ENCODE measurements at regions of chr16 and their contacts with region 1.

Region 1: DNA sequence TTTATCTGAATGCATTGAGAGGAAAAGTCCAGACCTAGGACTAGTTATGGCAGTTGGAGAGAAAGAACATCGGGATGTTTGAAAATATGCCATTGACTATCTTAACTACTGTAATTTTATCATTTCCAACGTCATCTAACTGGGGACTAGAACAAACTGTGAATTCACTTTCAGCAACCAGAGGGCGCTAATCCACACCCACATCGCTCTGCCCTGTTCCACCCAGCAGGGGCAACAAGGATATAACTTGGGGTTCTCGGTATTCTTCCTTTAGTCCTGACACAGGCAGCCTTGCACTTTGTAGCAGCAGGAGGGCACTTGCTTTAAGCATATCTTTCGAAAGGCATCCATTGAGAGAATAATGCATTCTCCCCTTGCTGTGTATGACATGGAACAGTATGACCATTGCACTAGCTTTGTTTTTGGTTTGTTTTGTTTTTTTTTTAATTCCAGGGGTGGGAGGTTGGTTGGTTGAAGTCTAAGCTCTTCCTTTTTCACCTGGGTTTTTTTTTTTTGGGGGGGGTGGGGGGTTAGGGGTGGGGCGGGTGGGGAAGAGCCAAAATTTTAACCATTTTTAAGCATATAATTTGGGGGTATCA is 31.5 kb downstream of the SIAH1 start:
- DNase-seq: peak; percentile 51 to 63
- H3K4me3 ChIP-seq: no peak overlapping the region
- H3K27ac ChIP-seq: no peak overlapping the region
- H3K4me1 ChIP-seq: peaks cover 0 to 2% (median 0%) of the 10 kb centered on the region in 4 experiments; a peak in 1 of 7 replicates
- H3K27me3 ChIP-seq: no peaks in the 10 kb centered on the region
- CTCF ChIP-seq: peak; percentile 79 to 99 (median 96)
- EP300 ChIP-seq: no peak
- POLR2A ChIP-seq: peak in 1 of 2 experiments; percentile 22; a peak in 1 of 3 replicates
- RAD21 ChIP-seq: peak; percentile 78 to 84

Region 2: DNA sequence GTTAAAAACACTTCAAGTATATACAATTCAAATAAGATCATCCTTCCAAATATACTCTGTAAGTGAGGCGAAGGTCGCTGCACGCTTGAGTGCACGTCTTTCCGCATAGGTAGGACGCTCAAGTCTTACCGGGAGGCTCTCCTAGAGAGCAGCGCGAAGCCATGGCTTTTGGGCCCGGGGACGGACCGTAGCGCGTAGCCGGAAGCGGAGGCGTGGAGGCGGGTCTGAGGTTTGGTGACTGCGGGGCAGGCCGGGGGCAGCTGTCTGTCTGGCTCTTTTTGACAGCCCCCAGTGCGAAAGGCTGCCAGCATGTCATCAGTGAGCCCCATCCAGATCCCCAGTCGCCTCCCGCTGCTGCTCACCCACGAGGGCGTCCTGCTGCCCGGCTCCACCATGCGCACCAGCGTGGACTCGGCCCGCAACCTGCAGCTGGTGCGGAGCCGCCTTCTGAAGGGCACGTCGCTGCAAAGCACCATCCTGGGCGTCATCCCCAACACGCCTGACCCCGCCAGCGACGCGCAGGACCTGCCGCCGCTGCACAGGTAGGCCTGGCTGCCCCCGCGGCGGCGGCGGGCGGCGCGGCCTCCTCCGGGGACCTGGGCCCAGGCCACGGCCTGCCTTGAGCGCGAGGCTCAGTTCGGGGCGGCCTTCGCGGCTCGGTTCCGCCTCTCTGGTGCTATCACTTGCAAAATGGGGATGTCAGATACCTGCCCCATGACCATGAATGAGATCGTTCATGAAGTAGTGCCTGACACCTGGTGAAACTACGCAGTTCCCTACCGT is 109.4 kb before region 1 on chr16 and contains the start of gene LONP2:
- CTCF ChIA-PET with region 1: no interaction called
- POLR2A ChIA-PET with region 1: no interaction called
- DNase-seq: peak; percentile 59 to 90
- H3K4me3 ChIP-seq: peak within 1 kb of the TSS; percentile 72 to 88 (median 80)
- H3K27ac ChIP-seq: no peak within 1 kb of the TSS; the same call in 1 of the 2 replicates
- H3K4me1 ChIP-seq: peaks cover 0 to 5% (median 2%) of the 10 kb centered on the region in 4 experiments; a peak in 3 of 7 replicates
- H3K27me3 ChIP-seq: no peaks in the 10 kb centered on the region
- CTCF ChIP-seq: no peak
- EP300 ChIP-seq: peak in 1 of 2 experiments; percentile 40; a peak in 1 of 3 replicates
- POLR2A ChIP-seq: peak in 1 of 2 experiments; percentile 56; a peak in 1 of 3 replicates
- RAD21 ChIP-seq: no peak
- total RNA-seq, gene LONP2: 22.4 and 23.1 TPM in 2 replicates

Region 3: DNA sequence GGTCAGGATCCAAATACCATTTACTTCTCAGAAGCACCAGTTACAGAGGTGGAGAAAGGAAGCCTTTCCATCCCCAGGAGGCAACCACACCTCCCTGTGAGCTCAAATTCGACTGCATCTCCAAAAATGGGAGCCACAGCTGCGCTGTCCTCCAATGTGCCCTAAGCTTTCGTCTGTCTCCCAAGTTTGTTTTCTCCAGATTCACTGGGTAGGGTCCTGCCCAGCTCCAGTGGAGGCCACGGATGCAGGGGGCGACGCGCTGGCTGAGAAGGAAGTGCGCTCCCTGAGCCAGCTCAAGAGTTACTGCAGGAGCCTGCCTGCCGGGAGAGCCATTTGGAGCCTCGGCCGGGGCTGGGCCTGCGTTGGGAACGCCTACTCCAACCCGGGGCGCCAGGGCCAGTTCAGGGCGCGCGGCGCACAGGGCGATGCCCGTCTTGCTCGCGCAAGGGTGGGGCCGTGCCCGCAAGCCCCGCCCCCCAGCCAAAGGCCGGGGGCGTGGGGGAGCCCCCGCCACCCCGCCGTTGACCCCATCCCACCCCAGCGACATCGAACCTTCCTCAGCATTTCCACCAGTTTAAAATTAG is 12.0 kb after region 1 on chr16:
- CTCF ChIA-PET with region 1: interaction called, 19 read pairs
- POLR2A ChIA-PET with region 1: interaction called, 42 read pairs
- DNase-seq: peak; percentile 82 to 93
- H3K4me3 ChIP-seq: peak overlapping the region; percentile 60 to 87 (median 74)
- H3K27ac ChIP-seq: peak overlapping the region; percentile 54
- H3K4me1 ChIP-seq: peaks cover 2 to 11% (median 6%) of the 10 kb centered on the region in 4 experiments; a peak in 5 of 7 replicates
- H3K27me3 ChIP-seq: no peaks in the 10 kb centered on the region
- CTCF ChIP-seq: peak in 2 of 3 experiments; percentile 13 to 19; a peak in 2 of 4 replicates
- EP300 ChIP-seq: no peak
- POLR2A ChIP-seq: peak; percentile 88 to 92
- RAD21 ChIP-seq: no peak; a peak in 1 of 4 replicates

Measured in H1 (cell line).